ENCODE measurements at regions of chr9 and their contacts with region 1.

Region 1: DNA sequence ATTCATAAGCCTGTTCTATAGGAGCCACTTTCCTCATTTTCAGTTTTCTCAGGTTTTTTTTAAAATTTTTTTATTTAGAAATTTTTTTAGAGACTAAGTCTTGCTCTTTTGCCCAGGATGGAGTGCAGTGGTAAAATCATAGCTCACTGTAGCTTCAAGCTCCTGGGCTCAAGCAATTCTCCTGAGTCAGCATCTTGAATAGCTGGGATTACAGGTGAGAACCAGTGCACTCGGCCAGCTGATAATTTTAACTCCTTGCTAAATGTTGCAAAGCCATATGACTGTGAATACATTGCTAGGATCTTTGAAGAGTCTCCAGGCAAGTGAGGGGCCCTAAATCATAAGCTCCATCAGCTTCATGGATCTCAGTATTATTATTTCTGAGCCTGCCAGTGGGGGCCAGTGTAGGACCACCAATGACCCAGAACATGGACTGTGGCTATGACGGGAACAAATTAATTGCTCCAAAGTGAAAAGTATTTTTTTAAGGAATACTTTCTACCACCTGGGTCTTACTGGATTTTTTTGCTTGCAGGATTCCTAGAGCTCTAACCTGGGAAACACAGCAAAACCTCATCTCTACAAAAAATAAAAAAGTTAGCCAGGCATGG is 5.7 kb upstream of the GAPVD1 start:
- DNase-seq: no peak
- ATAC-seq: peak; percentile 88
- H3K4me3 ChIP-seq: no peak overlapping the region
- H3K27ac ChIP-seq: no peak overlapping the region
- H3K4me1 ChIP-seq: peaks cover 11% of the 10 kb centered on the region
- H3K27me3 ChIP-seq: no peaks in the 10 kb centered on the region
- CTCF ChIP-seq: peak; percentile 2; the same call in 1 of the 2 replicates

Region 2: GRCh38 chr9:125374443-125375309 is 118.8 kb after region 1 on chr9:
- CTCF ChIA-PET with region 1: no interaction called
- POLR2A ChIA-PET with region 1: interaction called, 8 read pairs
- in situ Hi-C with region 1: no loop called
- intact Hi-C with region 1: loop called (anchors 5 kb)
- DNase-seq: peak; percentile 15
- ATAC-seq: peak; percentile 92
- H3K4me3 ChIP-seq: peak overlapping the region; percentile 24 to 41
- H3K27ac ChIP-seq: peak overlapping the region; percentile 29; the same call in 1 of the 2 replicates
- H3K4me1 ChIP-seq: peaks cover 5% of the 10 kb centered on the region
- H3K27me3 ChIP-seq: no peaks in the 10 kb centered on the region
- CTCF ChIP-seq: peak; percentile 81

Region 3: GRCh38 chr9:125393426-125393825 is 137.5 kb after region 1 on chr9:
- CTCF ChIA-PET with region 1: no interaction called
- POLR2A ChIA-PET with region 1: no interaction called
- in situ Hi-C with region 1: no loop called
- intact Hi-C with region 1: no loop called
- DNase-seq: no peak
- ATAC-seq: no peak
- H3K4me3 ChIP-seq: no peak overlapping the region
- H3K27ac ChIP-seq: no peak overlapping the region
- H3K4me1 ChIP-seq: no peaks in the 10 kb centered on the region
- H3K27me3 ChIP-seq: no peaks in the 10 kb centered on the region
- CTCF ChIP-seq: no peak

Measured in Panc1 (cell line).